ENCODE measurements at regions of chr5 and their contacts with region 1.

Region 1: GRCh38 chr5:150458819-150459557 is 9.4 kb upstream of the RPS14 start:
- DNase-seq: no peak
- H3K4me3 ChIP-seq: peak overlapping the region; percentile 29; the same call in 1 of the 2 replicates
- H3K27ac ChIP-seq: no peak overlapping the region
- H3K27me3 ChIP-seq: no peaks in the 10 kb centered on the region
- CTCF ChIP-seq: peak; percentile 76

Region 2: GRCh38 chr5:150486402-150487198 is 27.6 kb after region 1 on chr5:
- CTCF ChIA-PET with region 1: interaction called, 17 read pairs
- POLR2A ChIA-PET with region 1: interaction called, 6 read pairs
- DNase-seq: no peak
- H3K4me3 ChIP-seq: peak overlapping the region; percentile 87
- H3K27ac ChIP-seq: peak overlapping the region; percentile 77
- H3K27me3 ChIP-seq: no peaks in the 10 kb centered on the region
- CTCF ChIP-seq: no peak

Region 3: GRCh38 chr5:150523472-150524350 is 64.7 kb after region 1 on chr5:
- CTCF ChIA-PET with region 1: interaction called, 63 read pairs
- POLR2A ChIA-PET with region 1: no interaction called
- DNase-seq: peak; percentile 63
- H3K4me3 ChIP-seq: no peak overlapping the region
- H3K27ac ChIP-seq: no peak overlapping the region
- H3K27me3 ChIP-seq: no peaks in the 10 kb centered on the region
- CTCF ChIP-seq: peak; percentile 74

Region 4: DNA sequence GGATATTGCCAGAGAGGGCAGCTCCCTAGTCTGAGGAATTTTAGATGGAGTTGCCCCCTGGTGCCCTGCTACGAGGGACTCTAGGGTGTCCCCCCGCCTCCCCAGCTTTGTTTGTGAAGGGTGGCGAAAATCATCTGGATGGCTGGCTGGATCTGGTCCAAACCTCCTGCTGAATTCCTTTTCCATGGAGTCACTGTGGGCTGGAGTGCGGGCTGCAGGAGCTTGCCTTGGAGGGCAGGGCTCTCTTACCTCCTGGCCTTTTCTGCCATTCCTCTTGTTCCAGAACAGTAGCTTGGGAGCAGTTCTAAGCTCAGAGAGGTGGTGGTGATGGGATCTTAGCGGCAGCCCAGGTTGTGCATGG is 183.6 kb after region 1 on chr5:
- CTCF ChIA-PET with region 1: interaction called, 12 read pairs
- POLR2A ChIA-PET with region 1: no interaction called
- DNase-seq: peak; percentile 64
- H3K4me3 ChIP-seq: peak overlapping the region; percentile 74
- H3K27ac ChIP-seq: peak overlapping the region; percentile 95
- H3K27me3 ChIP-seq: no peaks in the 10 kb centered on the region
- CTCF ChIP-seq: no peak

Region 5: DNA sequence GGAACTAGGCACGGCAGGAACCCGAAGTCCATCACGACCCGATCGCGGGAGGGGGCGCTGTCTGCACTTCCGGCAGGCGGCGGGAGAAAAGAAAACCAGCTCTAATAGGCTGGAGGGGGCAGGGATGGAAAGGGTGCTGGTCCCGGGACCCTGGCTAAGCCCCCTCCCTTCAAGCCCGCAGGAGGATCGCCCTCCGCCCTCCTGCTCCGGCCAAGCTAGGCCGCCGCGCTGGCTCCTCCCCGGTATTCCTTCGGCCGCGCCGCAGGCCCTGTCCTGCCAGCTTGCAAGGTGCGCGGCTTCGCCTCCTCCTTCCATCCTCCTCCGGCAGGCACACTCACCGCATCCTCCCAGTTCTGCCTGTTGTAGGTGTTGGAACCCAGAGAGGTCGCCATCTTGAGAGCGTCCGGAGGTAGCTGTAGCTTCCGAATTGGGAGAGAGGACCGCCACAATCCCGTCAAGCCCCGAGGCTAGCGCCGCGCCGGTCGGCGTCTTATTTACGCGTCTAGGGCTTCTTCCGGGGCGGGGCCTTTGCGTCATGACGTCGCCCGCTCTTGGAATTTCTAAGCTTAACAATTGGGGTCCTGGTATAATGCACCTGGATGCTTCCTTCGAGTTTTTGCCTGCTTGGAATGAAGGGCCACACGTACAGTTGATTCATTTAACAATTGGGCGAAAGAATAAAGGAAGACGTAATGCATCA is 241.8 kb after region 1 on chr5 and contains the start of gene RBM22:
- CTCF ChIA-PET with region 1: interaction called, 11 read pairs
- POLR2A ChIA-PET with region 1: no interaction called
- DNase-seq: peak; percentile 58
- H3K4me3 ChIP-seq: peak within 1 kb of the TSS; percentile 95
- H3K27ac ChIP-seq: peak within 1 kb of the TSS; percentile 91
- H3K27me3 ChIP-seq: no peaks in the 10 kb centered on the region
- CTCF ChIP-seq: peak; percentile 63
- polyA plus RNA-seq, gene RBM22: 42.4 and 49.5 TPM in 2 replicates